Naive thymus-derived CD4-positive, alpha-beta T cell (primary cell): ENCODE measurements at regions of chr22 and their contacts with region 1.

Region 1: DNA sequence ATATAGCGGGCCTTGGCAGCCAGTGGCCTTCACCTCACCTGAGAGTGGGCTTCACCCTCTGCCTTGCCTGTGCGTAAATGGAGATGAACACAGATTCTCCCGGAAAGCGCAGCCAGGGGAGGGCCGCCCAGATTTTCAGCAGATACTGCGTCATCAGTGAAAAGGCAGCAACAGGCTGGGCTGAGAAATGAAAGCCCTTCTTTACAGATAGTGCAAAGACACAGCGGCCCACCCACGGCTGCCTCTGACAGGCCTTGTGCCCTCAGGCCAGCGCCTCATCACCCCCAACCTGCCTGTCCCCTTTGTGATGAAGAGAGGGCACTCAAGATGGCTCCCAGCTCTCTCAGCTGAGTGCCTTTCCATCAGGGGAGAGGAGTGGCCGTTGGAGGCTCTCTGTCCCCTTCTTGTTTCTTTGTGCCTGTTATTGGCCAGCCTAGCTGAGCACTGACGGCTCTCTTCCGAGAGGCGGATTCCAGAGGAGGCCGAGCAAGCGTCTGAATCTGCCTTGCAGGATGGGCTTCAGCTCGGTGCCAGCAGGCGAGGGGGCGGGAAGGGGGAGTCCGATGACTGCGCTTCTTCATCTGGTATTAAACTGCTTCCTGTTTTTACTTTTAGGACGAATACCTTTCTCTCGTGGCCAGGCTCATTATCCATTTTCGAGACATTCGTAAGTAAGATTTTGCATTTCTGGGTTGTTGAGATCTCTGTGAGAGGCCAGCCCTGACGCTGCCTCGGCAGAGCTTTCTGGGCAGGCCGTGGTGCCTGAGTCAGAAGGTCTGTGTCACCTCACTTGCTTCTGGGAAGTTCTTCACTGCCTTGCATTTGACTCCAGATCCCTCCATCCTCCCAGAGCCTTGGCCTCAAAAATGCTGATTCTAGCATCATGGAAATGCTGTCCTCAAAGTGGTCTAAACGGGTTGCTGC is 43.7 kb downstream of the MED15 start:
- DNase-seq: peak in 8 of 9 donors; percentile 39 to 57 (median 52)
- ATAC-seq: peak; percentile 46
- H3K4me3 ChIP-seq: peak overlapping the region; percentile 61
- H3K4me3 Mint-ChIP-seq: peak overlapping the region; percentile 67 to 91 (median 86)
- H3K27ac ChIP-seq: peak overlapping the region; percentile 69
- H3K27ac Mint-ChIP-seq: peak overlapping the region; percentile 93 to 100 (median 98)
- H3K4me1 ChIP-seq: peaks cover 83 to 93% of the 10 kb centered on the region in 2 donors
- H3K4me1 Mint-ChIP-seq: peaks cover 50 to 93% (median 88%) of the 10 kb centered on the region in 7 donors
- H3K27me3 ChIP-seq: no peaks in the 10 kb centered on the region
- H3K27me3 Mint-ChIP-seq: no peaks in the 10 kb centered on the region

Region 2: GRCh38 chr22:20312396-20313191 is 238.5 kb before region 1 on chr22:
- CTCF ChIA-PET with region 1: no interaction called
- POLR2A ChIA-PET with region 1: no interaction called
- intact Hi-C with region 1: no loop called
- DNase-seq: peak in 2 of 9 donors; percentile 4 to 17
- ATAC-seq: no peak
- H3K4me3 ChIP-seq: no peak overlapping the region
- H3K4me3 Mint-ChIP-seq: no peak overlapping the region
- H3K27ac ChIP-seq: no peak overlapping the region
- H3K27ac Mint-ChIP-seq: no peak overlapping the region
- H3K4me1 ChIP-seq: peaks cover 4 to 11% of the 10 kb centered on the region in 2 donors
- H3K4me1 Mint-ChIP-seq: peaks cover 5 to 13% (median 9%) of the 10 kb centered on the region in 7 donors
- H3K27me3 ChIP-seq: no peaks in the 10 kb centered on the region
- H3K27me3 Mint-ChIP-seq: no peaks in the 10 kb centered on the region

Region 3: GRCh38 chr22:20523086-20523983 is 27.7 kb before region 1 on chr22:
- CTCF ChIA-PET with region 1: no interaction called
- POLR2A ChIA-PET with region 1: interaction called, 14 read pairs
- intact Hi-C with region 1: no loop called
- DNase-seq: peak in 2 of 9 donors; percentile 2 to 11
- ATAC-seq: peak; percentile 59
- H3K4me3 ChIP-seq: no peak overlapping the region
- H3K4me3 Mint-ChIP-seq: peak overlapping the region; percentile 50 to 82 (median 66)
- H3K27ac ChIP-seq: peak overlapping the region; percentile 54
- H3K27ac Mint-ChIP-seq: peak overlapping the region; percentile 74 to 91 (median 86)
- H3K4me1 ChIP-seq: peaks cover 16 to 29% of the 10 kb centered on the region in 2 donors
- H3K4me1 Mint-ChIP-seq: peaks cover 48 to 79% (median 76%) of the 10 kb centered on the region in 7 donors
- H3K27me3 ChIP-seq: no peaks in the 10 kb centered on the region
- H3K27me3 Mint-ChIP-seq: no peaks in the 10 kb centered on the region

Region 4: GRCh38 chr22:20531315-20532201 is 19.5 kb before region 1 on chr22:
- CTCF ChIA-PET with region 1: no interaction called
- POLR2A ChIA-PET with region 1: interaction called, 738 read pairs
- intact Hi-C with region 1: loop called in 1 of 2 experiments (anchors 2 kb)
- DNase-seq: no peak
- ATAC-seq: no peak
- H3K4me3 ChIP-seq: no peak overlapping the region
- H3K4me3 Mint-ChIP-seq: peak overlapping the region in 8 of 10 donors; percentile 15 to 77 (median 56)
- H3K27ac ChIP-seq: peak overlapping the region; percentile 23
- H3K27ac Mint-ChIP-seq: peak overlapping the region; percentile 7 to 83 (median 79)
- H3K4me1 ChIP-seq: peaks cover 15 to 50% of the 10 kb centered on the region in 2 donors
- H3K4me1 Mint-ChIP-seq: peaks cover 51 to 77% (median 71%) of the 10 kb centered on the region in 7 donors
- H3K27me3 ChIP-seq: no peaks in the 10 kb centered on the region
- H3K27me3 Mint-ChIP-seq: no peaks in the 10 kb centered on the region

Region 5: DNA sequence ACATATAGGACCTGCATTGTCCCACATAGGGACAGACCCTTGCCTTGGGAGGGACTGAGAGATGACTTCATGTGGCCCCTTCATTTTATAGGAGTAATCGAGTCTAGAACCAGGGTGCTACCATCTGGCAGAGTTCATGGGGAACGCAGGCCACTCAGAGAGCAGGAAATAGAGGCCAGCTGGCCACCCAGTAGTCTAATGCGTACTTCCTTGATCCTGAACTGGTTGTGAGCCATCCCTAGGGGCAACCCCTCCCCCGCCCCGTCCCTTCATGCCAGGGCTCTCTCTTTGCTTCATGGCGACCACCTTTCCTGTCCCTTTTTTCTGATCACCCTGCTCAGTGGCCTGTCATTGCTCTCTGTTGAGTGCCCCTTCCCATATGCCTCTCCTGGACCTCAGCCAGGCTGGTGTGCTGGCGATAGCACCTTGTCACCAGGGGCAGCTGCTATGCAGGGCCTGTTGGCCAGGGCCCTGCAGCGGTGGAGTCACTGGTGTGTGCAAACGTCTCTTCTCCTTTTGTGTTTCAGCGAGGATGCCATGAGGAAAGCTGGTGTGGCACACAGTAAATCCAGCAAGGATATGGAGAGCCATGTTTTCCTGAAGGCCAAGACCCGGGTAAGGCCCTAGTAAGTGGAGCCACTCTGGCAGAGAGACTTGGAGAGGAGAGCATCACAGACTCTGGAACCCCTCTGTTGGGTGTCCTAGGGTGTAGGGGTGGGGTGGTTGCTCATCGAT is 14.3 kb before region 1 on chr22:
- CTCF ChIA-PET with region 1: interaction called, 7 read pairs
- POLR2A ChIA-PET with region 1: interaction called, 738 read pairs
- intact Hi-C with region 1: loop called in 1 of 2 experiments (anchors 1 kb)
- DNase-seq: no peak
- ATAC-seq: no peak
- H3K4me3 ChIP-seq: no peak overlapping the region
- H3K4me3 Mint-ChIP-seq: peak overlapping the region in 1 of 10 donors; percentile 53
- H3K27ac ChIP-seq: no peak overlapping the region
- H3K27ac Mint-ChIP-seq: peak overlapping the region in 8 of 9 donors; percentile 26 to 81 (median 68)
- H3K4me1 ChIP-seq: peaks cover 6 to 30% of the 10 kb centered on the region in 2 donors
- H3K4me1 Mint-ChIP-seq: peaks cover 34 to 61% (median 54%) of the 10 kb centered on the region in 7 donors
- H3K27me3 ChIP-seq: no peaks in the 10 kb centered on the region
- H3K27me3 Mint-ChIP-seq: no peaks in the 10 kb centered on the region